ENCODE measurements at regions of chr1 and their contacts with region 1.

Region 1: GRCh38 chr1:165914136-165914798 is 86.9 kb downstream of the UCK2 start:
- DNase-seq: peak; percentile 31 to 57
- ATAC-seq: peak; percentile 87 to 92
- H3K4me3 ChIP-seq: no peak overlapping the region
- H3K27ac ChIP-seq: no peak overlapping the region
- H3K4me1 ChIP-seq: peaks cover 0 to 15% of the 10 kb centered on the region in 2 donors
- H3K27me3 ChIP-seq: no peaks in the 10 kb centered on the region
- CTCF ChIP-seq: peak; percentile 82 to 92 (median 89)
- POLR2A ChIP-seq: no peak

Region 2: DNA sequence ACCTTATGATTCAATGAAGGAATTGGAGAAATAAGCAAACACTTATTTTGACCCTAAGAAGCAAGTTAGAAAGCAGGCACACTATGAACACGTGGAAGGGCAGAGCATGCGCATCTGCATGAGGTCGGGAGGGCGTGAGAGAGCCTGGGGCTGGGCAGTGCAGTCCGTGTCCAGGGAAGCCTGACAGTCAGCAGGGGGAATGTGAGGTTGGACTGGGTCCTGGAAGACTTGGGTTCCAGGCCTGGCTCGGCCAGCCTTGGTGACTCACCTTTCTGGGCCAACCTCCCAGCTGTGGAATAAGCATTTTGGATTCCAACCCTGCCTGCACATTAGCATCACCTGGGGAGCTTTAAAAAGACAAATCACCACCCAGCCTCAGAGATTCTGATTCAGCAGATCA is 531.2 kb before region 1 on chr1:
- in situ Hi-C with region 1: loop called in 1 of 4 experiments (anchors 10 kb)
- intact Hi-C with region 1: no loop called
- DNase-seq: peak; percentile 88 to 90
- ATAC-seq: peak; percentile 98 to 99
- H3K4me3 ChIP-seq: no peak overlapping the region
- H3K27ac ChIP-seq: peak overlapping the region; percentile 59 to 73 (median 66)
- H3K4me1 ChIP-seq: peaks cover 8 to 12% of the 10 kb centered on the region in 2 donors
- H3K27me3 ChIP-seq: no peaks in the 10 kb centered on the region
- CTCF ChIP-seq: no peak
- POLR2A ChIP-seq: no peak

Region 3: GRCh38 chr1:165397944-165398343 is 516.3 kb before region 1 on chr1:
- in situ Hi-C with region 1: loop called in 3 of 4 experiments (anchors 10 kb)
- intact Hi-C with region 1: loop called (anchors 5 kb)
- DNase-seq: no peak
- ATAC-seq: peak; percentile 37 to 49
- H3K4me3 ChIP-seq: no peak overlapping the region
- H3K27ac ChIP-seq: peak overlapping the region; percentile 16 to 54 (median 38)
- H3K4me1 ChIP-seq: peaks cover 6% of the 10 kb centered on the region in 2 donors
- H3K27me3 ChIP-seq: no peaks in the 10 kb centered on the region
- CTCF ChIP-seq: no peak
- POLR2A ChIP-seq: no peak

Region 4: GRCh38 chr1:165717918-165718515 is 196.2 kb before region 1 on chr1:
- in situ Hi-C with region 1: loop called in 2 of 4 experiments (anchors 5 to 10 kb)
- intact Hi-C with region 1: loop called (anchors 1 kb)
- DNase-seq: no peak
- ATAC-seq: no peak
- H3K4me3 ChIP-seq: no peak overlapping the region
- H3K27ac ChIP-seq: no peak overlapping the region
- H3K4me1 ChIP-seq: no peaks in the 10 kb centered on the region
- H3K27me3 ChIP-seq: no peaks in the 10 kb centered on the region
- CTCF ChIP-seq: peak in 4 of 5 experiments; percentile 20 to 52 (median 46)
- POLR2A ChIP-seq: no peak

Region 5: GRCh38 chr1:165827268-165828102 is 86.8 kb before region 1 on chr1 and contains the start of gene UCK2:
- in situ Hi-C with region 1: loop called in 3 of 4 experiments (anchors 10 kb)
- intact Hi-C with region 1: loop called (anchors 2 kb)
- DNase-seq: peak; percentile 72 to 81
- ATAC-seq: peak; percentile 82 to 86
- H3K4me3 ChIP-seq: peak within 1 kb of the TSS; percentile 78 to 99 (median 85)
- H3K27ac ChIP-seq: peak within 1 kb of the TSS; percentile 87 to 97 (median 96)
- H3K4me1 ChIP-seq: peaks cover 8 to 9% of the 10 kb centered on the region in 2 donors
- H3K27me3 ChIP-seq: no peaks in the 10 kb centered on the region
- CTCF ChIP-seq: peak in 4 of 5 experiments; percentile 15 to 45 (median 30)
- POLR2A ChIP-seq: peak; percentile 86 to 91
- total RNA-seq, gene UCK2: 14.0 to 32.7 (median 24.1) TPM

Measured in gastrocnemius medialis (tissue), 4 donors.